ENCODE measurements at regions of chr20 and their contacts with region 1.

Region 1: DNA sequence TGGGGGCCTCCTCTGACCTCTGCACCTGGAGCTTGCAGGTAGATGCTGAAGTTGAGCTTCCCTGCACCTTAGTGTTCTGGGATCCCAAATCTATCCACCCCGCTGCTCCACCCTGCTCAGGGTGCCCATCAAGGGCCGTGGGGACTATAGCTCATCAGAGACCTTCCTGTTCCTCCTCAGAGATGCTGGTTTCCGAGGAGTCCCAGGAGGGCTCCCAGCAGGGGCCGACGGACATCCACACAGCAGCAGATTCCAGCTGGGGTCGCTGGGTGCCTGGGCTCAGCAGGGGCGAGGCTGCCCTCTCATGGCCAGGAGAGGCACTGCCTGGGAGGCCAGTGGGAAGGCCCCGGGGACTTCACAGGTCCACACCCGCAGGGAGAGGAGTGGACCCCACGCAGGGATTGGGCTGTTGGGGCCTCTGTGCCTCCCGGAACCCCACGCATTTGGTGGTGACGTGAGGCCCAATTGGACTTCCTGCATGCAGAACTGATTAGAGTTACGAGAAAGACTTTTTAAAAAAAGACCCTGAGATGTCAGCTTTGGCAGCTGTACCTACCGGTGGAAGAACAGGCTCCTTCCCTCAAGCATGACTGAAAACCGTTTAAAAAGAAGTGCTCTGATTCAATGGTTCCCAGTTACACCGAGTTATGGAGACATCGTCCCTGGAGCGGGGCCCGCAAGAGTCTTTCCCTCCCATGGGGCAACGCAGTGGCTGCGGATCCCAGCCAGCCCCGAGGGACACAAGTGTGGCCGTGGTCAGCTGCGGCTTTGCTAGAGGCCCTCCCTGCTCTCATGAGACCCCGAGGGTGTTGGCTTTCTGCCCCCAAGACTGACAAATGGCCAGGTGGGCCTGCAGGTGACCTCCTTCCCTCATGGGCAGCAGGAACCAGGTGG is 25.3 kb upstream of the SLCO4A1 start:
- DNase-seq: peak; percentile 84
- H3K4me3 Mint-ChIP-seq: peak overlapping the region; percentile 48
- H3K27ac Mint-ChIP-seq: peak overlapping the region; percentile 90
- H3K4me1 Mint-ChIP-seq: peaks cover 28% of the 10 kb centered on the region
- H3K27me3 Mint-ChIP-seq: no peaks in the 10 kb centered on the region

Region 2: GRCh38 chr20:62407221-62407992 is 209.6 kb before region 1 on chr20 and contains the start of gene CABLES2:
- CTCF ChIA-PET with region 1: interaction called, 6 read pairs
- POLR2A ChIA-PET with region 1: no interaction called
- intact Hi-C with region 1: loop called (anchors 10 kb)
- DNase-seq: peak; percentile 95
- H3K4me3 Mint-ChIP-seq: peak within 1 kb of the TSS; percentile 78
- H3K27ac Mint-ChIP-seq: peak within 1 kb of the TSS; percentile 69
- H3K4me1 Mint-ChIP-seq: peaks cover 23% of the 10 kb centered on the region
- H3K27me3 Mint-ChIP-seq: no peaks in the 10 kb centered on the region
- total RNA-seq, gene CABLES2: 7.8 to 8.2 TPM

Region 3: GRCh38 chr20:62523473-62524203 is 93.3 kb before region 1 on chr20:
- CTCF ChIA-PET with region 1: interaction called, 10 read pairs
- POLR2A ChIA-PET with region 1: no interaction called
- intact Hi-C with region 1: loop called (anchors 1 kb)
- DNase-seq: peak; percentile 89
- H3K4me3 Mint-ChIP-seq: no peak overlapping the region
- H3K27ac Mint-ChIP-seq: no peak overlapping the region
- H3K4me1 Mint-ChIP-seq: peaks cover 15% of the 10 kb centered on the region
- H3K27me3 Mint-ChIP-seq: peaks cover 20% of the 10 kb centered on the region

Region 4: GRCh38 chr20:62536871-62537401 is 80.0 kb before region 1 on chr20:
- CTCF ChIA-PET with region 1: no interaction called
- POLR2A ChIA-PET with region 1: no interaction called
- intact Hi-C with region 1: no loop called
- DNase-seq: no peak
- H3K4me3 Mint-ChIP-seq: no peak overlapping the region
- H3K27ac Mint-ChIP-seq: no peak overlapping the region
- H3K4me1 Mint-ChIP-seq: no peaks in the 10 kb centered on the region
- H3K27me3 Mint-ChIP-seq: no peaks in the 10 kb centered on the region

Region 5: DNA sequence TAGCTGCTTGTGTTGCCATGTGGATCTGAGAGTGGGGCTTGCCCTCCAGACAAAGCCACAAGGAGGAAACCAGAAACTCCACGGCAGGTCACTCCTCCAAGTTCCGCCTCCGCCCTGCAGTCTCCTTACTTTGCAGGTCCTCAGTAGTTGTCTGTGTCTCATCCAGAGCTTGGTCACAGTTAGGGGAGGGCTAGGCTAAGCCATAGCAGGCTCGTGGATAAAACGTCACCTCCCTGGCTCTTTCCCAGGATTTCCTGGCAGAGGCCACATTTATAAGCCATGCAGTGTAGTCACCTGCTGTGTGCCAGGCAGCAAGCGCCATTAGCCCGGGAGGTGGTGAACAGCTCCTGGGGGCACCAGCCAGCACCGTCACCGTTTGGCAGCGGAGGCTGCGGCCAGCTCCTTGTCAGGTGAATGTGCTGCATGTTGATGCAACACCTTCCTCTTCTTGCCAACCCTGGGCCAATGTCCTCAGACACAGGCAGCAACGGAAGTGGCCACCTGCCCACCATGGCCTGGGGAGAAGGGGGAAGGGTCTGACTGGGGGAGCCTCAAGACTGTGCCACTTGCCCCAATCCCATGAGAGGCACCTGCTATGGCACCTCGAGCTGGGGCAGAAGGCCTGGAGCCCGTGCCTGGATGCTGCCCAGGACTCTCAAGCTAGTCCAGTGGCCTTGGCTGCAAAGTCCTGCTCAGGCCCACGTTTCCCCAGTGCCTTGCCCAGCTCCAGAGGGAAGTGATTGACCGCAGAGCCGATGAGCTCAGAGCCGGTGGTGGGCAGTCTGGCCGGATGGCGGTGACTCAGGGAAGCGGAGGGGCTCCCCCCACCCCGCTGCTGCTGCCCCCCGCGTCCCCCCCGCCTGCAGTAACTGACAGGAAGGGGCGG is 13.7 kb before region 1 on chr20:
- CTCF ChIA-PET with region 1: interaction called, 13 read pairs
- POLR2A ChIA-PET with region 1: no interaction called
- intact Hi-C with region 1: loop called (anchors 2 kb)
- DNase-seq: peak; percentile 79
- H3K4me3 Mint-ChIP-seq: peak overlapping the region; percentile 46
- H3K27ac Mint-ChIP-seq: peak overlapping the region; percentile 44
- H3K4me1 Mint-ChIP-seq: peaks cover 19% of the 10 kb centered on the region
- H3K27me3 Mint-ChIP-seq: peaks cover 12% of the 10 kb centered on the region

Region 6: DNA sequence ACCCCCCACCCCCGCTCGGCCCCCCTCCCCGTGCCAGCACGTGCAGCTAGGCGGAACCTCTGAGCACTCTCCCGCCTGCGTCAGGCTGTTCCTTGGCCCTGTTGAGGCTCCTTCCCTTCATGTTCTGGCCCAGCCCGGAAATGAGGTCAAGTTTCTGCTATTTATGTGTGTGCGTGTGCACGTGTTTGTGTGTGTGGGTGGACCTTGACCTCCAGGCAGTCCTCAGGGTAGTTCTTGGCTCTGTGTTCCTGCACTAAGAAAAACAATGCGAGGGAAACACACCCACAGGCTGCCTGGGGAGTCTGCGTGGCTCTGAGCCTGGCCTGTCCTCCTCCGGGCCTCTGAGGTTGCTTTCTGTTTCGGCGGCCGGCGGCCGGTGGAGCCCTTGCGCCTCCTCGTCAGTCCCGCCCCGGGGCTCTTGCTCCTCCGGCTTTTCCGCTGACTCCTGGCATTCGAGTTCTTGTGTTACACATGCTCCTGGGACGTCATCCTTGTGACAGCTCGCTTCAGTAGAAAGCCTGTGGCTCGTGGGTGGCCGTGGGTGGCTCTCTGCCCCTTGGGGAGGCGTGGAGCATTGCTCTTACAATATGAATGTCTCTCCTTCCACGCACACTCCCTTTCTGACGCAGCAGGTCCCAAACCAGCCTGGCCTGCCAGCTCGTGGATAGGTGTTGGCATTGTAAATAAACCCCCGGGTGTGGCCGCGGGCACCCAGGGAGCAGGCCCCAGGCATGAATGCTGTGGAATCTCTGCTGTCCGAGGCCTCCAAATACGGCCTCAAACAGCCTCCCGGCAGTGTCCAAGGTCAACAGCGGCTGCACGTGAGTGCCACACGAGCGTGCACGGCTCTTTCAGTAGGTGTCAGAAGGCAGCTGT is 35.3 kb after region 1 on chr20:
- CTCF ChIA-PET with region 1: interaction called, 8 read pairs
- POLR2A ChIA-PET with region 1: interaction called, 3 read pairs
- intact Hi-C with region 1: loop called (anchors 5 kb)
- DNase-seq: peak; percentile 80
- H3K4me3 Mint-ChIP-seq: peak overlapping the region; percentile 63
- H3K27ac Mint-ChIP-seq: peak overlapping the region; percentile 84
- H3K4me1 Mint-ChIP-seq: peaks cover 29% of the 10 kb centered on the region
- H3K27me3 Mint-ChIP-seq: no peaks in the 10 kb centered on the region

Region 7: DNA sequence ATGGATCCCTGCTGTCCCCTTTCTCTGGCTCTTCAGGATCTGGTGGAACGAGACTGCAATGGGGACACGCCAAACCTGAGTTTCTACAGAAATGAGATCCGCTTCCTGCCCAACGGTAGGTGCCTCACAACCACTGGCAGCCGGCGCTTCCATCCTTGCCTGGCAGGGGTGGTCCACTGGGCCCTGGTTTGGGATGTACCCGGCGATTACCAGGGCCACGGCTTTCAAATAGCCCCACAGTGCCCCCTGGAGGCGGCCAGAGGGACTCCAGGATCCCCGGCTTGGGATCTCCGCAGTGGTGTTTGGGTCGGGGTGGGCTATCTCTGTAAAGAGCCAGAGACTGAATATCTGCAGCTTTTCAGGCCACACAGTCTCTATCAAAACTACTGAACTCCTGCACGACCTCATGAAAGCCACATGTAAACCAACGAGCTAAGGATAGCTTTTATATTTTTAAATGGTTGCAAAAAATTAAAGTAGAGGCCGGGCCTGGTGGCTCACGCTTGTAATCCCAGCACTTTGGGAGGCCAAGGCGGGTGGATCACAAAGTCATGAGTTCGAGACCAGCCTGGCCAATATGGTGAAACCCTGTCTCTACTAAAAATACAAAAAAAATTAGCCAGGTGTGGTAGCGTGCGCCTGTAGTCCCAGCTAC is 191.4 kb after region 1 on chr20:
- CTCF ChIA-PET with region 1: interaction called, 11 read pairs
- POLR2A ChIA-PET with region 1: no interaction called
- intact Hi-C with region 1: no loop called
- DNase-seq: peak; percentile 80
- H3K4me3 Mint-ChIP-seq: no peak overlapping the region
- H3K27ac Mint-ChIP-seq: no peak overlapping the region
- H3K4me1 Mint-ChIP-seq: peaks cover 24% of the 10 kb centered on the region
- H3K27me3 Mint-ChIP-seq: no peaks in the 10 kb centered on the region

Measured in activated CD4-positive, alpha-beta memory T cell treated with anti-CD3 and anti-CD28 coated beads for 36 hours (primary cell).